PC-9 (cell line): ENCODE measurements at regions of chr17 and their contacts with region 1.

Region 1: GRCh38 chr17:75319904-75320691 is 30.9 kb upstream of the SLC25A19 start:
- DNase-seq: no peak
- H3K4me3 ChIP-seq: no peak overlapping the region
- H3K27ac ChIP-seq: no peak overlapping the region
- H3K4me1 ChIP-seq: no peaks in the 10 kb centered on the region
- H3K27me3 ChIP-seq: no peaks in the 10 kb centered on the region
- CTCF ChIP-seq: no peak

Region 2: DNA sequence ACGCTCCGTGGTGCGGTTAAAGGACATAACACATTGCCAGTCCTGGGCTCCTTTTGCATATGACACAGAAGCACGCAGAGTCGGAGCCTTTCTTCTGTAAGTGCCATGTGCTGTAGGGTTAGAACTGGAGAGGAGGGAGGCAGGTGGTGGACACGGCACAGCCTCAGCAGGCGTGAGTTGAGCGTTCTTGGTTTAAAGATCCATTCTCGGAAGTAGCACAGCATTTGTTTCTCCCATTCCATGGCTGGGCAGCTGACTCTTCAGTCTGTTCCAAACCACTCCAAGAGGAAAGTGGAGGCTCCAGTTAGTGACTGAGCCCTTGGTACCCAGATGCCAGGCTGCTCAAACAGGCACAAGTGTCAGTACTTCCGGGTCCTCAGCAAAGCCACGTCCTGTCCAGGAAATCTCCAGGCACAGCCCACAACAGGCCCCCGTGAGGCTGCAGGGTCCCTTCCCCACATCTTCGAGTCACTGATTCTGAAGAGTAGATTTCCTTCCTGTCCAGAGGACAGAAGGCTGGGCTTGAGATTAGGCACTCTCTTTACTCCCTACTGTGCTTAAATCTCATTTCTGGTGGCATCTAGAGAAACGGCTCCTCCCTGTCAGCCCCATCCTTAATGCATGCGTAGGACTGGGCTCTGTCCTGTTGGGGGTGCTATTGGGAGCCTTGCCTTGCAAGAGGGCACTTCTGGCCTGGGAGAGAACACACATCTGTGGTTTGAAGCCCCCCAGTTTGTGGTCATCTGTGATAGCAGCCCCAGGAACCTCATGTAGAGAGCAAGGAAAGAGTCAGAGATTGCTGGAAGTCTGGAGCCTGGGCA is 504.3 kb before region 1 on chr17:
- CTCF ChIA-PET with region 1: no interaction called
- POLR2A ChIA-PET with region 1: no interaction called
- intact Hi-C with region 1: no loop called
- DNase-seq: no peak
- H3K4me3 ChIP-seq: no peak overlapping the region
- H3K27ac ChIP-seq: no peak overlapping the region
- H3K4me1 ChIP-seq: no peaks in the 10 kb centered on the region
- H3K27me3 ChIP-seq: no peaks in the 10 kb centered on the region
- CTCF ChIP-seq: no peak; the same call in 1 of the 2 replicates

Region 3: GRCh38 chr17:75345514-75346167 is 25.5 kb after region 1 on chr17:
- CTCF ChIA-PET with region 1: interaction called, 10 read pairs
- POLR2A ChIA-PET with region 1: no interaction called
- intact Hi-C with region 1: no loop called
- DNase-seq: no peak
- H3K4me3 ChIP-seq: no peak overlapping the region
- H3K27ac ChIP-seq: no peak overlapping the region
- H3K4me1 ChIP-seq: no peaks in the 10 kb centered on the region
- H3K27me3 ChIP-seq: no peaks in the 10 kb centered on the region
- CTCF ChIP-seq: no peak

Region 4: GRCh38 chr17:75356260-75356937 is 36.3 kb after region 1 on chr17:
- CTCF ChIA-PET with region 1: interaction called, 11 read pairs
- POLR2A ChIA-PET with region 1: no interaction called
- intact Hi-C with region 1: no loop called
- DNase-seq: no peak
- H3K4me3 ChIP-seq: no peak overlapping the region
- H3K27ac ChIP-seq: no peak overlapping the region
- H3K4me1 ChIP-seq: peaks cover 12% of the 10 kb centered on the region; the same call in 1 of the 2 replicates
- H3K27me3 ChIP-seq: no peaks in the 10 kb centered on the region
- CTCF ChIP-seq: no peak

Region 5: GRCh38 chr17:75405365-75406221 is 85.5 kb after region 1 on chr17 and contains the start of gene GRB2:
- CTCF ChIA-PET with region 1: interaction called, 10 read pairs
- POLR2A ChIA-PET with region 1: interaction called, 27 read pairs
- intact Hi-C with region 1: loop called (anchors 1 kb)
- DNase-seq: peak; percentile 84 to 99
- H3K4me3 ChIP-seq: peak within 1 kb of the TSS; percentile 82
- H3K27ac ChIP-seq: peak within 1 kb of the TSS; percentile 35
- H3K4me1 ChIP-seq: peaks cover 11% of the 10 kb centered on the region
- H3K27me3 ChIP-seq: no peaks in the 10 kb centered on the region
- CTCF ChIP-seq: no peak
- total RNA-seq, gene GRB2: 75.3 and 81.3 TPM in 2 replicates

Region 6: GRCh38 chr17:75447951-75448856 is 128.1 kb after region 1 on chr17:
- CTCF ChIA-PET with region 1: interaction called, 11 read pairs
- POLR2A ChIA-PET with region 1: no interaction called
- intact Hi-C with region 1: no loop called
- DNase-seq: no peak
- H3K4me3 ChIP-seq: no peak overlapping the region
- H3K27ac ChIP-seq: no peak overlapping the region
- H3K4me1 ChIP-seq: no peaks in the 10 kb centered on the region
- H3K27me3 ChIP-seq: no peaks in the 10 kb centered on the region
- CTCF ChIP-seq: no peak